Common myeloid progenitor, CD34-positive (primary cell): ENCODE measurements at regions of chr15 and their contacts with region 1.

Region 1: GRCh38 chr15:65638681-65639089 is 16.9 kb downstream of the SLC24A1 start:
- DNase-seq: peak; percentile 72 to 86 (median 86)
- H3K4me3 ChIP-seq: peak overlapping the region in 1 of 7 experiments; percentile 43
- H3K27ac ChIP-seq: no peak overlapping the region
- H3K4me1 ChIP-seq: peaks cover 0 to 4% (median 1%) of the 10 kb centered on the region in 4 experiments
- H3K27me3 ChIP-seq: no peaks in the 10 kb centered on the region

Region 2: GRCh38 chr15:65626856-65627255 is 11.8 kb before region 1 on chr15:
- CTCF ChIA-PET with region 1: interaction called, 24 read pairs
- POLR2A ChIA-PET with region 1: no interaction called
- DNase-seq: no peak
- H3K4me3 ChIP-seq: no peak overlapping the region
- H3K27ac ChIP-seq: no peak overlapping the region
- H3K4me1 ChIP-seq: no peaks in the 10 kb centered on the region
- H3K27me3 ChIP-seq: no peaks in the 10 kb centered on the region

Region 3: DNA sequence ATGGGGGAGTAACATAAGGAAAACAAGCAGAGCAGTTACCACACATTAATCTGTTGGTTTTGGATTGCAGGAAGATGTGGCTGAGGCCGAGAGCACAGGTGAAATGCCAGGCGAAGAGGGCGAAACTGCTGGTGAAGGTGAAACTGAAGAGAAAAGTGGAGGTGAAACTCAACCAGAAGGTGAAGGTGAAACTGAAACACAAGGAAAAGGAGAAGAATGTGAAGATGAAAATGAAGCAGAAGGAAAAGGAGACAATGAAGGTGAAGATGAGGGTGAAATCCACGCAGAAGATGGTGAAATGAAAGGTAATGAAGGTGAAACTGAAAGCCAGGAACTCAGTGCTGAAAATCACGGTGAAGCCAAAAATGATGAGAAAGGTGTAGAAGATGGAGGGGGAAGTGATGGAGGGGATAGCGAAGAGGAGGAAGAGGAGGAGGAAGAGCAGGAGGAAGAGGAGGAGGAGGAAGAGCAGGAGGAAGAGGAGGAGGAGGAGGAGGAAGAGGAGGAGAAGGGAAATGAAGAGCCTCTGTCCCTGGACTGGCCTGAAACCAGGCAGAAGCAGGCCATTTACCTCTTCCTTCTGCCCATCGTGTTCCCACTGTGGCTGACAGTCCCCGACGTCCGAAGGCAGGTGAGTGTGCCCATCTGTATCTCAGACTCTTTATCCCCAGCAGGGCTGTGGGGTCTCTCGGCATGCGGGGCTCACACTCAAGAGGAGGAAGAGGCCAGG is 11.8 kb after region 1 on chr15:
- CTCF ChIA-PET with region 1: interaction called, 14 read pairs
- POLR2A ChIA-PET with region 1: no interaction called
- DNase-seq: no peak
- H3K4me3 ChIP-seq: no peak overlapping the region
- H3K27ac ChIP-seq: no peak overlapping the region
- H3K4me1 ChIP-seq: no peaks in the 10 kb centered on the region
- H3K27me3 ChIP-seq: no peaks in the 10 kb centered on the region